ENCODE measurements at regions of chr2 and their contacts with region 1.

Region 1: GRCh38 chr2:189440947-189441708 is at the start of gene WDR75:
- DNase-seq: peak; percentile 84 to 96 (median 92)
- H3K4me3 ChIP-seq: peak within 1 kb of the TSS; percentile 52 to 99 (median 89)
- H3K27ac ChIP-seq: peak within 1 kb of the TSS; percentile 73 to 99 (median 93)
- H3K27me3 ChIP-seq: no peaks in the 10 kb centered on the region
- CTCF ChIP-seq: peak in 47 of 56 donors; percentile 5 to 71 (median 37)
- total RNA-seq, gene WDR75: 19.4 to 51.0 (median 38.0) TPM

Region 2: DNA sequence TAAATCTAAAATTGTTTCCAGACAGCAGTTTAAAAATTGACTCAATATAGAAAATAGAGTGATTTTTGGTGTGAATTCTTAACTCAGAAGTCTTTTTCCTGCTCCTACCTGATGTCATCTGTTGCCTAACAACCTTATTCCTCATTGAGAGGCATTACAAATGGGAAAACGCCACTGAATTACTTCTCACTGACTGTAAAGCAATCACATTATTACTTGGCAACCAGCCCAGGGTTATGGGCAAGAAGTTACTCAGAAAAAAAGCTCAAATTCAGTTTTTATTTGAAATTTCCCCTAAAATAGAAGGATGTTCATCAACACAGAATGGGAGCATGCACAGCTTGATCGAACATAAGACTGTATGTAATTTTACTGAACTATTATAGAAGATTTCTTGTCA is 1351.2 kb before region 1 on chr2:
- intact Hi-C with region 1: loop called in 1 of 2 experiments (anchors 10 kb)
- DNase-seq: no peak
- H3K4me3 ChIP-seq: no peak overlapping the region
- H3K27ac ChIP-seq: no peak overlapping the region
- H3K27me3 ChIP-seq: no peaks in the 10 kb centered on the region
- CTCF ChIP-seq: no peak

Region 3: DNA sequence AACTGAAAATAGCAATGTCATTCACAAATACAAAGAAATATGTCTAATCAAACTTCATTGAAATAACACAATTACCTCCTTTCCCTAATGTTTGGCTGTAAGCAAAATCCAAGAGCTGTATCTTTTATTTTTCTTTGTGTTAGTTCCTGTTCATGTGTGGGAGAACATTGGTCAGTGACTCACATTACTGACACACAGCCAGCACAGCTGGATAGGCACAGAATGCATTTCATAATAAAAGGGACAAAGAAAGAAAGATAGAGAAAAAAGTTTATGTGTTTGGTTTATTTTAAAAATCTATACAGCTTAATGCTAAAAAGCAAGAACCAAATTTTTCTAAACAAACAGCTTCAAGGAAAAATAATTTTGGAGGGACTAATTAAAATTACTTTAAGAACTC is 652.5 kb before region 1 on chr2:
- intact Hi-C with region 1: no loop called
- DNase-seq: peak in 5 of 10 donors; percentile 8 to 51 (median 36)
- H3K4me3 ChIP-seq: peak overlapping the region in 1 of 59 donors; percentile 11
- H3K27ac ChIP-seq: peak overlapping the region in 25 of 59 donors; percentile 1 to 86 (median 51)
- H3K27me3 ChIP-seq: no peaks in the 10 kb centered on the region
- CTCF ChIP-seq: no peak

Region 4: GRCh38 chr2:190319555-190320498 is 878.7 kb after region 1 on chr2 and contains the start of gene HIBCH:
- intact Hi-C with region 1: loop called in 1 of 2 experiments (anchors 5 kb)
- DNase-seq: peak; percentile 95 to 99 (median 98)
- H3K4me3 ChIP-seq: peak within 1 kb of the TSS; percentile 67 to 93 (median 81)
- H3K27ac ChIP-seq: peak within 1 kb of the TSS in 58 of 59 donors; percentile 82 to 99 (median 94)
- H3K27me3 ChIP-seq: no peaks in the 10 kb centered on the region
- CTCF ChIP-seq: peak; percentile 71 to 97 (median 90)
- total RNA-seq, gene HIBCH: 29.2 to 189 (median 49.2) TPM